OCI-LY7 (cell line): ENCODE measurements at regions of chr3 and their contacts with region 1.

Region 1: GRCh38 chr3:43879166-43879565 is 188.4 kb downstream of the ABHD5 start:
- DNase-seq: peak; percentile 73
- H3K4me3 ChIP-seq: no peak overlapping the region
- H3K27ac ChIP-seq: no peak overlapping the region
- H3K4me1 ChIP-seq: peaks cover 22% of the 10 kb centered on the region
- CTCF ChIP-seq: peak; percentile 81

Region 2: DNA sequence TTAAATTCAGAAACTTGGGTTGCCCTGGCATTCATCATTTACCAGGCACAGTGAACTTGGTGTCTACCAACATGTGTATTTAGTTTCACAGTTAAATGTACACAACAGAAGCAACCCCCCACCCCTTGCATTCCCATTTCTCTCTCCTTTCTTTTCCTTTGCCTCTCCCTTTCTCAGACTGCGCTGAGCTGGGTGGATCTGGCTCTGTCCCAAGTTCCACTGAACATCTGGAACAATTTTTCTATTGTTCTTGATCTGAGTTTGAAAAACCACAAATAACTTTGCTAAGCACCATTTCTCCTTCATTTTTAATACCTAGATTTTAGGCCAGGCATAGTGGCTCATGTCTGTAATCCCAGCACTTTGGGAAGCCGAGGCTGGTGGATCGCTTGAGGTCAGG is 53.8 kb after region 1 on chr3:
- CTCF ChIA-PET with region 1: no interaction called
- POLR2A ChIA-PET with region 1: no interaction called
- intact Hi-C with region 1: no loop called
- DNase-seq: no peak
- H3K4me3 ChIP-seq: no peak overlapping the region
- H3K27ac ChIP-seq: no peak overlapping the region
- H3K4me1 ChIP-seq: no peaks in the 10 kb centered on the region
- CTCF ChIP-seq: no peak

Region 3: GRCh38 chr3:44114142-44114541 is 235.0 kb after region 1 on chr3:
- CTCF ChIA-PET with region 1: no interaction called
- POLR2A ChIA-PET with region 1: no interaction called
- intact Hi-C with region 1: loop called (anchors 10 kb)
- DNase-seq: peak; percentile 29
- H3K4me3 ChIP-seq: no peak overlapping the region
- H3K27ac ChIP-seq: no peak overlapping the region
- H3K4me1 ChIP-seq: no peaks in the 10 kb centered on the region
- CTCF ChIP-seq: peak; percentile 73